ENCODE measurements at regions of chr15 and their contacts with region 1.

Region 1: DNA sequence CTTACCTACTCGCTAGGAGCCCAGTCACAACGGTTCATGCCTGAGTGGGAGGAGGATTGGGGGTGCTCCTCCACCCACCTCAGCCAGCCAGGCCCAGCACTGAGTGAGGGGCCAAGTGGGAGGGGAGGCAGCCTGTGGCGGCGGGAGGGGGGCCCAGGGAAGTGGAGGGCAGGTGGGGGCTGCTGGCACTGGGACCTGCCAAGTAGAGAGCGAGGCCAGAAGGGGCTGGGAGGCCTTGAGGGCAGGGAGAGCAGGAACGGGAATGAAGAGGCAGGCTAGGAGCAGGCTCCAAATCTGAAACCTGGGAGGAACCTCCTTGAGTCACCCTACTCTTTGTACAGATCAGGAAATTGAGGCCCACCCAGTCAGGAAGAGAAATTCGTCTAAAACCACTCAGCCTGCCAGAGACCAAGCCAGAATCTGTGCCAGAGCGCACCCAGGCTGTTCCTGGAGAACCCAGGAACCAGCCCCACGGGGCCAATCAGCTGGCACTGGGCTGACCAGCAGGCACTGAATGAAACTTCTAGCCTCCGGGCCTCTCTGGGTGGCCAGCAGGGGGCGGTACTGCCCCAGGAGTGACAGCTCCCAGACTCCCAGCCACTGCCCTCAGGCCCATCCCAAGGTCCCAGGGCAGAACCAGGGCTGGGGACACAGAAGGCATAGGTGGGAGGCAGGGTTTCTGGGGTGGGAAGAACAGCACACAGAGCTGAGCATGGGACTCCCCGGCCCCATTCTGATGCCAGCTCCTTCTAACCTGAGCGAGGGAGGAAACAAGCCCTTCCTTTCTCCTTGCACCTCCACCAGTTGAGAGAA is 14.8 kb upstream of the CYP11A1 start:
- DNase-seq: peak; percentile 85
- ATAC-seq: no peak
- H3K4me3 Mint-ChIP-seq: no peak overlapping the region
- H3K27ac Mint-ChIP-seq: peak overlapping the region; percentile 96
- H3K4me1 Mint-ChIP-seq: peaks cover 86% of the 10 kb centered on the region
- H3K27me3 Mint-ChIP-seq: no peaks in the 10 kb centered on the region
- CTCF ChIP-seq: peak; percentile 99

Region 2: GRCh38 chr15:74396445-74397238 is 14.4 kb after region 1 on chr15:
- CTCF ChIA-PET with region 1: interaction called, 40 read pairs
- POLR2A ChIA-PET with region 1: interaction called, 141 read pairs
- intact Hi-C with region 1: no loop called
- DNase-seq: peak; percentile 91
- ATAC-seq: peak; percentile 42
- H3K4me3 Mint-ChIP-seq: peak overlapping the region; percentile 49
- H3K27ac Mint-ChIP-seq: peak overlapping the region; percentile 98
- H3K4me1 Mint-ChIP-seq: peaks cover 98% of the 10 kb centered on the region
- H3K27me3 Mint-ChIP-seq: no peaks in the 10 kb centered on the region
- CTCF ChIP-seq: no peak

Region 3: DNA sequence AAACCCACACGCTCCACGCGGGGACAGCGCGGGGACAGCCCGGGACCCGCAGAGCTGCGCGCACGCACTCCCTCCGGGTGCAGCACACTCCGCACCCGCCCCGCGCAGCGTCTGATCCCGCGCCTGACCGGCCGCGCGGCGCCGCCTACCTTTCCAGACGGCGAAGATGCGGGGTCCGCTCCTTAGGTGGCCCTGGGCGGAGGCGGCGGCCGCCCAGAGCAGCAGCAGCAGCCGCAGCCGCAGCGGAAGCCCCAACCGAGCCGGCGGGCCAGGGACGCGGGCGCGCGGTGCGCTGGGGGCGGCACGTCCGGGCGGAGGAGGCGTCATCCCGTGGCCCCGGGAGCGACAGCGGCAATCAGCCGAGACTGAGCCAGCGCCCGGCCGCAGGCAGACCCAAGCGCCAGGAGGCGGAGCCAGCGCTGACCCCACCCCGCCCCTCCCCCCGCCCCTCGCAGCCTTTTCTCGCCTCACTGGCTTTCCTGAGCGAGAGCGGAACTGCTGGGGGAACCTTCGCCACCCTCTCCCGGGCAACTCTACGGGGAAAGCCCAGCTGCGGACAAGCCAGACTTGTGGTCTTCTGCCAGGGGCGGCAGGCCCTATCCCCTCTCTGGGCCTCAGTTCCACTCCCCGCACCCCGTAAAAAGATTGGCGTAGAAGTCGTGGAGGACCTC is 51.5 kb after region 1 on chr15 and contains the start of gene SEMA7A:
- CTCF ChIA-PET with region 1: interaction called, 840 read pairs
- POLR2A ChIA-PET with region 1: interaction called, 14 read pairs
- intact Hi-C with region 1: loop called (anchors 1 kb)
- DNase-seq: peak; percentile 85
- ATAC-seq: peak; percentile 89
- H3K4me3 Mint-ChIP-seq: peak within 1 kb of the TSS; percentile 93
- H3K27ac Mint-ChIP-seq: peak within 1 kb of the TSS; percentile 89
- H3K4me1 Mint-ChIP-seq: peaks cover 64% of the 10 kb centered on the region
- H3K27me3 Mint-ChIP-seq: no peaks in the 10 kb centered on the region
- CTCF ChIP-seq: no peak
- total RNA-seq, gene SEMA7A: 62.4 TPM

Region 4: DNA sequence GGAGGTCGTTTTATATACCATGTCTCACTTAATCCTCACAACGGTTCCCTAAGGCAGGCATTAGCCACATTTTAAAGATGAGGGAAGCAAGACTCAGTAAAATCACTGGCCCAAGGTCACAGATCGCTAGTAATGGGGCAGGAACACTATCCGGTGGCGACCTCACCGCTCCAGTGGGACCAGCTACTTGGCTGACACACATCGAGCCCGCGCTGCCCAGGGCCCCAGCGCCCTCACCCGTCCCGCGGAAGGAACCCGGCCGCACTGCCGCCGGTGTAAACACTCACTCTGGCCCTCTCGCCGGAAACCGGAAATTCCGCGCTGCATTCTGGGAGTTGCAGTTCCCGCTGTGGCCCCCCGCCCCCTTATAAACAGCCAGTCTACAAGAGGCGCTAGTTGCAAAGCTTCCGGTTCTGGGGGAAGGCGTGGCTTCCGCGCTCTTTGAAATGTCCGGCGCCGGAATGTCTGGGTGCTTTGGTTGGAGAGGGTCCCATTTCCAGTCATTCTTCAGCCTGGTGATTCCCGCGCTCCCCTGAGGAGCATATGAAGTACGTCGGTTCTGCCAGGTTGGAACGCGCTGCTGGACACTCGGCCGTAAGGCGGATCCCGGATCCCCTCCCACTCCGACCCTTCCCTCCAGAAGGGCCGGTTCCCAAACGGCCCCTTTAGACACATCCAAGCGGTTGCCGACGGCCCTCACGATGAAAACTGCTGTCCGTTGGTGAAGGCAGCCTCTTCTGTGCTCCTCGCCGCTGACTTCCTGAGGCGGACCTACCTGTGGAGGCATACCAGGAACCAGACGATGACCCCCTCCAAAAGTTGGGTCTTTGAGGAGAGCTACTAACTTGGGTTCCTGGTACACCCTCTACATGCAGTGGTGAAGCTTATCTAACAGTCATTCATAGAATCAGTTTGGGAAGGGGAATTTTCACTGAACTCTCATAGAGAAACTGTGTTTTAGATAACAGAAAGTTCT is 78.9 kb after region 1 on chr15 and contains the start of gene UBL7:
- CTCF ChIA-PET with region 1: interaction called, 840 read pairs
- POLR2A ChIA-PET with region 1: interaction called, 12 read pairs
- intact Hi-C with region 1: no loop called
- DNase-seq: peak; percentile 99
- ATAC-seq: peak; percentile 97
- H3K4me3 Mint-ChIP-seq: peak within 1 kb of the TSS; percentile 80
- H3K27ac Mint-ChIP-seq: peak within 1 kb of the TSS; percentile 92
- H3K4me1 Mint-ChIP-seq: peaks cover 49% of the 10 kb centered on the region
- H3K27me3 Mint-ChIP-seq: no peaks in the 10 kb centered on the region
- CTCF ChIP-seq: no peak
- total RNA-seq, gene UBL7: 48.8 to 53.3 TPM

Region 5: GRCh38 chr15:74545880-74546656 is 163.9 kb after region 1 on chr15:
- CTCF ChIA-PET with region 1: interaction called, 10 read pairs
- POLR2A ChIA-PET with region 1: interaction called, 10 read pairs
- intact Hi-C with region 1: loop called (anchors 5 kb)
- DNase-seq: peak; percentile 99
- ATAC-seq: peak; percentile 75
- H3K4me3 Mint-ChIP-seq: peak overlapping the region; percentile 63
- H3K27ac Mint-ChIP-seq: peak overlapping the region; percentile 72
- H3K4me1 Mint-ChIP-seq: peaks cover 80% of the 10 kb centered on the region
- H3K27me3 Mint-ChIP-seq: no peaks in the 10 kb centered on the region
- CTCF ChIP-seq: no peak